Activated T-helper 2 cell treated with anti-CD3 and anti-CD28 coated beads, Interferon-gamma antibody, Interleukin-2, Interleukin-4, amounts not matched to agents 10 μg/mL and 5 μg/mL and 100 μg/mL, durations not matched to agents 14 hours and 24 hours and 36 hours (primary cell): ENCODE measurements at regions of chr14 and their contacts with region 1.

Region 1: GRCh38 chr14:20454516-20455354 is at the starts of genes APEX1 and OSGEP:
- DNase-seq: peak; percentile 97
- H3K4me3 Mint-ChIP-seq: peak within 1 kb of the TSS; percentile 63
- H3K27ac Mint-ChIP-seq: no peak within 1 kb of the TSS
- H3K4me1 Mint-ChIP-seq: peaks cover 11% of the 10 kb centered on the region
- H3K27me3 Mint-ChIP-seq: no peaks in the 10 kb centered on the region
- total RNA-seq, gene APEX1: 217 and 228 TPM in 2 replicates
- total RNA-seq, gene OSGEP: 66.0 and 66.5 TPM in 2 replicates

Region 2: DNA sequence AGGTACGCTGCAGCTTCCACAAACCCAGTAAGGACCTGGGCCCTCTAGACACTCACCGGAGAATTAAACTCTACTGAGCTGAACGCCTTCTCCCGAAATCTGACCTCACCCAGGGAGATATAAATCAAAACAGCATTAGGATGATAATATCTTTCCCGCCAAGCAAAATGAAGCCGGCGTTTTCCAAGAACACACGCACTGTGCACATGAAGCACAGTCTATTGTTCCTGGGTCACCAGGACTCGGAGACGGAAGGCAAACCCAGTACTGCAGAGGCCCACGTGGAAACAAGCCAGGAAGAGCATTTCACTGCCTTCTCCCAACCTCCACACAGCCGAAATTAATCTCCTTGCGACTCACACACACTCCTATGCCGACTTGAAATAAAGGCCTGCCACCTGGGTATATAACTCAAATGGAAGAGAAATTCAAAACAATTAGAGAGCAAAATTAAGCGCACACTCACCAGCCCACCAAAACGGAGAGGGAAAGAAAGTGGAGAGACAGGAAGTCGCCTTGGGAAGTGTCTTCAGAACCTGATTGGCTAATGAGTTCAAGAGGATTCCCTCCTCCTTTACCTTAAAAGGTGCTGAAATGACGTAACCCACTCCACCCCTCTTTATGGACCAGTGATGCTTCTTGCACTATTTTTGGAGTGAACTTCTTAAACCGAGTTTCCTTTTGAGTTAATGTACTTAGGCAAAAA is 121.8 kb before region 1 on chr14 and contains the start of gene CCNB1IP1:
- intact Hi-C with region 1: loop called (anchors 2 kb)
- DNase-seq: peak; percentile 48
- H3K4me3 Mint-ChIP-seq: peak within 1 kb of the TSS; percentile 97
- H3K27ac Mint-ChIP-seq: peak within 1 kb of the TSS; percentile 88
- H3K4me1 Mint-ChIP-seq: peaks cover 45% of the 10 kb centered on the region
- H3K27me3 Mint-ChIP-seq: peaks cover 4% of the 10 kb centered on the region
- total RNA-seq, gene CCNB1IP1: 44.0 and 46.8 TPM in 2 replicates

Region 3: DNA sequence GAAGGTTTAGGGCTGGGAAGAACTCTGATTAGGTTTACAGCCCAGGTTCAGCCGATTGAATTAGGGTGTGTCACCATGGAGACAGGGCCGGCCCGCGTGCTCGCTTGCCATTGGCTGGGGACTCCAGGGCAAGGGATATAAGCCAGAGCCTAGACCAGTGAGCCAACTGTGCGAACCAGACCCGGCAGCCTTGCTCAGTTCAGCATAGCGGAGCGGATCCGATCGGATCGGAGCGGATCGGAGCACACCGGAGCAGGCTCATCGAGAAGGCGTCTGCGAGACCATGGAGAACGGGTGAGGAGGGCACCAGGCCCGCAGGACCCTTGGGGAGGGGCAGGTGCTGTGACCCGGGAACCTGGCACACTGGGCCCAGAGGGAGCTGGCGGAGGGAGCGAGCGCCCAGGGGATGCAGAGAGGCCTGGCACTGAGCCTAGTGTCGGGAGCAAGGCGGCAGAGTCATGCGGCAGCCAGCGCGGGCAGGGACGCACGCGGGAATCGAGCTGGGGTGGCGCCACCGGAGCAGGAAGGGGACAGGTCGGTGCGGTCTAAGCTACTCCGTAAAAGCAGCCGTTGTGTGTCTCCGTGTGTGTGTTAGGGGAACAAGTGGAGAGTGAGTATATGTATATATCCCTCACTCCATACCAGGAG is 14.6 kb after region 1 on chr14 and contains the start of gene PNP:
- intact Hi-C with region 1: loop called (anchors 1 kb)
- DNase-seq: peak; percentile 86
- H3K4me3 Mint-ChIP-seq: peak within 1 kb of the TSS; percentile 94
- H3K27ac Mint-ChIP-seq: peak within 1 kb of the TSS; percentile 96
- H3K4me1 Mint-ChIP-seq: peaks cover 32% of the 10 kb centered on the region
- H3K27me3 Mint-ChIP-seq: peaks cover 4% of the 10 kb centered on the region
- total RNA-seq, gene PNP: 133 and 137 TPM in 2 replicates